ENCODE measurements at regions of chr16 and their contacts with region 1.

Region 1: DNA sequence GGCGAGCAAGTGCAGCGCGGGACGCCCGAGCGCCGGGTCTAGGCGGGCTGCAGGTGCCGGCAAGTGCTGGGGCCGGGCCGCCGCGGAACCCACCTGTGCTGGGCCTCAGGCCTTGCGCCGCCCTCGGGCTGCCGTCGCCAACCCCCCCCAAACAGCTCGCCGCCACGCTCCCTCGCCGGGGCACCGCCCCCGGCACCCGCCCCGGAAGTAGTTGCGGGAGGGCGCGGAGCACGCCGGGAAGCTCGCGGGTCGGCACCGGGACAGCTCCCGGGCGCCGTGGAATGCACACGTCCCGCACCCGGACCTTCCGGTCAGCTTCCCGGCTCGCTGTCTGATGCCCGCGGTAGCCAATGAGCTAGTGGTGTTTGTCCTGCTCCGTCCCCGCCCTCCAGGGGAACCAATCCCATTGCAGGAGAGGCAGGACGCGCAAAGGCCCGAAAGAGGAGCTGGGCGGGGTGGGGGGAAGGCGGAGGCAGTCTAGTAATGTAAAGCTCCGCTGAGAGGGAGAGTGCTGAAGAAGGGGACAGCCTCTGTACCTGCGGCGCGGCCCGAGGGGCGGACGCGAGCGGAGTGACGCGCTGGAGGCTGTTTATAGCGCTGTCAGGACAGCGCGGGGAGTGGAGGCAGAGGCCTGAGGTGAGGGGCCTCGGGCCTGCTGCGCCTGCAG is at the starts of genes ANKS3 and DNAAF8:
- DNase-seq: peak; percentile 86
- H3K4me3 Mint-ChIP-seq: peak within 1 kb of the TSS; percentile 86
- H3K27ac Mint-ChIP-seq: peak within 1 kb of the TSS; percentile 69
- H3K4me1 Mint-ChIP-seq: peaks cover 17% of the 10 kb centered on the region
- H3K27me3 Mint-ChIP-seq: no peaks in the 10 kb centered on the region
- total RNA-seq, gene ANKS3: 11.7 to 13.3 TPM
- total RNA-seq, gene DNAAF8: 0.31 TPM in 1 of 2 experiments, not detected in the other

Region 2: DNA sequence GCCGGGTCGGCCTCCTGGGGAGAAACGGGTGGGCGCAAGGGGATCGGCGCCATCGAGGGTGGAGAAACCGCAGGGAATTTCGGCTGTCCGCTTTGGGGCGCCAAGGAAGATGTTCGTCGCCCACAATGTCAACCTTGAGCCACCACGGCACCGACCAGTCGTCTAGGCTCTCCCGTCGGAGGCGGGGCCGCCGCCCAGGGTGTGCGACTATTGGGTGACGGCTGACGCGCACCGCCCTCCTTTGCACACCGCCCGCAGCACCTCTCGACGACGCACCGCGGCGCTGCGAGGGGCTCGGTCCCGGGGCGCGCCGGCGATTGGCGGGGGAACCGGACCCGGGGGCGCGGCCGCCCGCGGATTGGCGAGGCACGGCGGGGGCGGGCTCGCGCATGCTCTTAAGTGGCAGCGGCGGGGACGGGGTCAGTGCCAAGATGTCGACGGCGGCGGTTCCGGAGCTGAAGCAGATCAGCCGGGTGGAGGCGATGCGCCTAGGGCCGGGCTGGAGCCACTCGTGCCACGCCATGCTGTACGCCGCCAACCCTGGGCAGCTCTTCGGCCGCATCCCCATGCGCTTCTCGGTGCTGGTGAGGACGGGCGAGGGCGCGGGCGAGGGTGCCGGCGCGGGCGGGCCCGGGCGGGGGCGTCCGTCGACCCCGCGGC is 40.8 kb before region 1 on chr16 and contains the start of gene NUDT16L1:
- CTCF ChIA-PET with region 1: no interaction called
- POLR2A ChIA-PET with region 1: interaction called, 7 read pairs
- intact Hi-C with region 1: loop called (anchors 1 kb)
- DNase-seq: peak; percentile 98
- H3K4me3 Mint-ChIP-seq: peak within 1 kb of the TSS; percentile 79
- H3K27ac Mint-ChIP-seq: peak within 1 kb of the TSS; percentile 69
- H3K4me1 Mint-ChIP-seq: peaks cover 13% of the 10 kb centered on the region
- H3K27me3 Mint-ChIP-seq: no peaks in the 10 kb centered on the region
- total RNA-seq, gene NUDT16L1: 22.2 to 23.6 TPM

Region 3: GRCh38 chr16:4957720-4958509 is 223.7 kb after region 1 on chr16 and contains the start of gene SEC14L5:
- CTCF ChIA-PET with region 1: interaction called, 5 read pairs
- POLR2A ChIA-PET with region 1: no interaction called
- intact Hi-C with region 1: loop called (anchors 1 kb)
- DNase-seq: peak; percentile 97
- H3K4me3 Mint-ChIP-seq: peak within 1 kb of the TSS; percentile 66
- H3K27ac Mint-ChIP-seq: no peak within 1 kb of the TSS
- H3K4me1 Mint-ChIP-seq: peaks cover 15% of the 10 kb centered on the region
- H3K27me3 Mint-ChIP-seq: peaks cover 28% of the 10 kb centered on the region
- total RNA-seq, gene SEC14L5: 0.07 TPM in 1 of 2 experiments, not detected in the other

Measured in activated CD4-positive, alpha-beta memory T cell treated with anti-CD3 and anti-CD28 coated beads for 36 hours (primary cell).